Activated CD4-positive, alpha-beta T cell treated with anti-CD3 and anti-CD28 coated beads, Interleukin-2, amount 10 ng/mL, durations not matched to agents 24 days and 14 days (primary cell): ENCODE measurements at regions of chr1 and their contacts with region 1.

Region 1: GRCh38 chr1:167043752-167044488 is 46.3 kb downstream of the GPA33 start:
- DNase-seq: peak; percentile 91
- H3K4me3 Mint-ChIP-seq: peak overlapping the region; percentile 83
- H3K27ac Mint-ChIP-seq: peak overlapping the region; percentile 76
- H3K4me1 Mint-ChIP-seq: peaks cover 12% of the 10 kb centered on the region
- H3K27me3 Mint-ChIP-seq: peaks cover 37% of the 10 kb centered on the region

Region 2: GRCh38 chr1:166999090-166999489 is 44.8 kb before region 1 on chr1:
- intact Hi-C with region 1: loop called (anchors 10 kb)
- DNase-seq: no peak
- H3K4me3 Mint-ChIP-seq: no peak overlapping the region
- H3K27ac Mint-ChIP-seq: peak overlapping the region; percentile 15
- H3K4me1 Mint-ChIP-seq: peaks cover 10% of the 10 kb centered on the region
- H3K27me3 Mint-ChIP-seq: peaks cover 16% of the 10 kb centered on the region